ENCODE measurements at regions of chr11 and their contacts with region 1.

Region 1: DNA sequence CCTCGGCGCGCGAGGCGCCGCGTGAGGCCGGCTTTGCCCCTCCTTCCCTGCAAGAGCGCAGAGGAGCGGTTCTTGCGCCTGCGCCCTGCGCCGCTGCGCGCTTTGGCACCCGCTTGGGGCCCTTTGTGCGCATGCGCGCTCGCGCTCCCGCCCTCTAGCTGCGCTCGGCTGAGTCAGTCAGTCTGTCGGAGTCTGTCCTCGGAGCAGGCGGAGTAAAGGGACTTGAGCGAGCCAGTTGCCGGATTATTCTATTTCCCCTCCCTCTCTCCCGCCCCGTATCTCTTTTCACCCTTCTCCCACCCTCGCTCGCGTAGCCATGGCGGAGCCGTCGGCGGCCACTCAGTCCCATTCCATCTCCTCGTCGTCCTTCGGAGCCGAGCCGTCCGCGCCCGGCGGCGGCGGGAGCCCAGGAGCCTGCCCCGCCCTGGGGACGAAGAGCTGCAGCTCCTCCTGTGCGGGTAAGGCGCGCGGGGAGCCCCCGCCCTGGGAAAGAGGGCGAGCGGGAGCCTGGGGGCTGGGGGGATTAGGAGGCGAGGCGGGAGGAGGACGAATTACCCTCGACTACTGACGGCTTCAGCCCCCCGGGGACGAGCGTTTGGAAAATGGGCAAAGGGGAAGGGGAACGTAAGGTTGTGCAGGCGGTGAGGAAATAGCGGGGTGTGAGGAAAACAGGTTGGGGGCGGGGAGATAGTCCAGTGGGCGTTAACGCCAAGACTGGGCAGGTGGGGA is at the start of gene RTN3:
- DNase-seq: peak; percentile 100
- H3K4me3 Mint-ChIP-seq: peak within 1 kb of the TSS; percentile 87
- H3K27ac Mint-ChIP-seq: peak within 1 kb of the TSS; percentile 76
- H3K4me1 Mint-ChIP-seq: peaks cover 21% of the 10 kb centered on the region
- H3K27me3 Mint-ChIP-seq: peaks cover 10% of the 10 kb centered on the region
- total RNA-seq, gene RTN3: 51.3 and 54.2 TPM in 2 replicates

Region 2: DNA sequence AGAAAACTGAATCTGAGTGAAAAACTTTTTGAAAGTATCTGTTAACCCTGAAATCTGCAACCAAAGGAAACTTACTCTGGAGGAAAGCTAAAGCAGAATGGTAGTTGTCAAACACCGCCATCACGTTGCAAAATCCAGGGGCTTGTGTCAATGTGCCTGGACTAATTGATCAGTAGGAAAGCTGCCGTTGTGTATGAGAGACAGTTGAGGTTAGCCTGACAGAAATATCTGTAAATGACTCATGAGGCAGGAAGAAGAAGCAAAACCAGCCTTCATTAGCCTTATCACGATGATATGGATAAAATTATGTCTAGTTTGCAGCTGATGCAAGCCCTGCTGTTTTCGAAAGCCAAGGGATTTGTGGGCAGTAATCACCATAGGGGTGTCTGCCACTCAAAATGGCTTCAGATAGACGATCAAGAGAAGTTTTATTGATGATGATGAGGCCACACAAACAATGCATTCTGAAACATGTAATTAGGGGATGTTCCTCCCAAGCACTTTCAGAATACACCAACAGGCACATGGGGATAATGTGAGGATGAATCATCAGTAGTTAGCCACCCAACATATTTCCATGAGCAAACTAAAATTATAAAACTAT is 1253.8 kb before region 1 on chr11:
- intact Hi-C with region 1: loop called (anchors 5 kb)
- DNase-seq: peak; percentile 74
- H3K4me3 Mint-ChIP-seq: peak overlapping the region; percentile 56
- H3K27ac Mint-ChIP-seq: peak overlapping the region; percentile 95
- H3K4me1 Mint-ChIP-seq: peaks cover 48% of the 10 kb centered on the region
- H3K27me3 Mint-ChIP-seq: peaks cover 5% of the 10 kb centered on the region

Region 3: DNA sequence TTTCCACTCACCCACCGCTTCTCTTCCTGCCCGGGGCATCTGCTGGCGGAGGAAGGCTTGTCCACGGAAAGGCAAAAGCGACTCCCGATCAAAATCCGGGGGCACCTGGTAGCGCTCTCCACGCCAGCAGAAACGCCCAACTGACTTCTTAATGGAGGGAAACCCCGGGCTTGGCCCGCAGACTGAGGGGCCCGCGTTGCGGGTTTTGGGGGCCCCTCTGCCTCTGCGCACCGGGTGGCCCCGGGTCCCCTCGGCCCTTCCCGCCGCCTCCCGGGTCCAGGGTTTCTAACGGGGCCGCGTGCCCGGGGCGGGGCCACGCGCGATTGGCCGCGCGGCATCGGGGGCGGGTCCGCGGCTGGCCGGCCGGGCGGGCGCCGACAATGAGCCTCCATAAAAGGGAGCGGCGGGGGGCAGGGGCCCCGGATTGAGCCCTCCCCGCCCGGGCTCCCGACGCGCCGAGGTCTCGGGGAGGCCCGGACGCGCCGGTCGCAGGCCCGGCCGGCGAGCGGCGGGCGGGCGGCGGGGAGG is 131.6 kb after region 1 on chr11 and contains the start of gene SPINDOC:
- intact Hi-C with region 1: loop called (anchors 1 kb)
- DNase-seq: peak; percentile 95
- H3K4me3 Mint-ChIP-seq: peak within 1 kb of the TSS; percentile 86
- H3K27ac Mint-ChIP-seq: peak within 1 kb of the TSS; percentile 78
- H3K4me1 Mint-ChIP-seq: peaks cover 30% of the 10 kb centered on the region
- H3K27me3 Mint-ChIP-seq: peaks cover 3% of the 10 kb centered on the region
- total RNA-seq, gene SPINDOC: 60.2 and 65.8 TPM in 2 replicates

Region 4: DNA sequence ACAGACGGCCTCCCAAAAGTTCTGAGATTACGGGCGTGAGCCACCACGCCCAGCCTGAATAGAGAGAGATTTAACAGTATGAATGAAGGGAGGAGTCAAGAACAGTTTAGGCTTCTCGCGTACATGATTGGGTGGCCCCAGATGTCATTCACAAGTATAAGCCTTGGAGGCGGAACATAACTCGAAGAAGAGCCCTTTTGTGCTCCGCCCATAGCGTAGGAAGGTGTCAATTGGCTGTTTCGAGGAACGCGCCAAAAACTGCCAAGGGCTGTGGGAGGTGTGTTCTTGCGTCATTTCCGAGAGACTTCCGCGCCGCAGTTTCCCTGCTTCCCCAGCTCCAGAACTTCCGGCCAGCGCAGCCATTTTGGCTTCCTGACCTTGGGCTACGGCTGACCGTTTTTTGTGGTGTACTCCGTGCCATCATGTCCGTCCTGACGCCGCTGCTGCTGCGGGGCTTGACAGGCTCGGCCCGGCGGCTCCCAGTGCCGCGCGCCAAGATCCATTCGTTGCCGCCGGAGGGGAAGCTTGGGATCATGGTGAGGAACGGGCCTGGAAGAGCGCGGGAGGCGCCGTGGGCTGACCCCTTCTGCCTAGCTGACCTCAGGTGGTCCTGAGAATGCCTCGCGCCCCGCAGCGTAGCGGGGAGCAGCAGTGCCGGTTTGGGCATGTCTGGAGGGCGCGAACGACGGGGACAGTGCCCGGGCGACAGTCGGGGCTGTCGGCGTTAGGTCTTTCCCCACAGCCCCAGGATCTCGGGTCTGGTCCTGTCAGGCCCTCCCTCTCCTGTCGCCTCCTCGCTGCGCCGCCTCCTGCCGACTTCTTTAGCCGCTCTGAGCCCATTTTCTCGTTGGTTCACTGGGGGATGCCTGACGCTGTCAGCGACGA is 293.0 kb after region 1 on chr11 and contains the start of gene COX8A:
- intact Hi-C with region 1: loop called (anchors 5 kb)
- DNase-seq: peak; percentile 99
- H3K4me3 Mint-ChIP-seq: peak within 1 kb of the TSS; percentile 100
- H3K27ac Mint-ChIP-seq: peak within 1 kb of the TSS; percentile 99
- H3K4me1 Mint-ChIP-seq: peaks cover 18% of the 10 kb centered on the region
- H3K27me3 Mint-ChIP-seq: peaks cover under 1% of the 10 kb centered on the region
- total RNA-seq, gene COX8A: 302 TPM in 2 replicates